Ascending aorta (tissue), 2 donors: ENCODE measurements at regions of chr11 and their contacts with region 1.

Region 1: DNA sequence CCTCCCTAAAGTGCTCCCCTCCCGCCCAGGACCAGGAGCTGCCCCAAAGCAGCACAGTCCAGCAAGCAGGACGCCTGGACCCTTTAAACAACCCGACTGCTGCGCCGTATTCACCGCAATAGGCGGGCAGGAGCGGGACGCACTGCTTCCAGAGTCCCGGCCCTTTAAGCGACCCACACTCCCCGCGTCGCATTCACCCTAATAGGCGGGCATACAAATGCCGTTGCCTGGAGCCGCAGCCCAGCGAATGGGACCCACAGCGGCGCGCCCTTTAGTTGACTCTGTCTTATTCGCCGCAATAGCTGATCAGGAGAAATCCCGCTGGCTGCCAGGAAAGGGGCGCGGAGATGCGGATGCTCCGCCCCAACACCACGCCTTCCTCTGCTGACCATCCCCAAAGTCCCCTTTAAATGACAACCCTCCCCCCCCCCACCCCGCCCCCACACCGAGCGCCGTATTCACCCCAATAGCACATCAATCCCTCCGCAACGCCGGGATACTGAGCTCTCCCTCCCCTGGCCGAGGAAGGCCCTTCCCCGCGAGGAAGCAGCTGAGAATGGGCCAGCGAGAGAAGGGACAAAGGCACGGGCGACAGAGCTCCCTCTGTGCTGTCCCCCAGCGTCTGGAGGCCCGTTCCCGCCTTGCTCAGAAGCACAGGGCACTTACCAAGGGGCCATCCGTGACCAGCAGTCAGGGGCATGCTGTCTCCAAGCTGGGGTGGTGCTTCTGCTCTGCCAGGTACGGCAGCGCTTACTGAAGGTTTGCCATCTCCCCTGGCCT is 4.7 kb downstream of the OSBPL5 start:
- DNase-seq: peak; percentile 57 to 95
- H3K4me3 ChIP-seq: peak overlapping the region; percentile 64 to 86
- H3K27ac ChIP-seq: peak overlapping the region; percentile 91 to 93
- H3K4me1 ChIP-seq: peaks cover 40 to 63% of the 10 kb centered on the region in 2 donors
- H3K27me3 ChIP-seq: no peaks in the 10 kb centered on the region
- CTCF ChIP-seq: no peak

Region 2: GRCh38 chr11:2992234-2992996 is 168.0 kb before region 1 on chr11 and contains the start of gene NAP1L4:
- intact Hi-C with region 1: loop called (anchors 5 kb)
- DNase-seq: peak; percentile 85 to 97
- H3K4me3 ChIP-seq: peak within 1 kb of the TSS; percentile 74 to 80
- H3K27ac ChIP-seq: peak within 1 kb of the TSS; percentile 71 to 90
- H3K4me1 ChIP-seq: peaks cover 6 to 27% of the 10 kb centered on the region in 2 donors
- H3K27me3 ChIP-seq: no peaks in the 10 kb centered on the region
- CTCF ChIP-seq: no peak
- total RNA-seq, gene NAP1L4: 54.5 TPM

Region 3: DNA sequence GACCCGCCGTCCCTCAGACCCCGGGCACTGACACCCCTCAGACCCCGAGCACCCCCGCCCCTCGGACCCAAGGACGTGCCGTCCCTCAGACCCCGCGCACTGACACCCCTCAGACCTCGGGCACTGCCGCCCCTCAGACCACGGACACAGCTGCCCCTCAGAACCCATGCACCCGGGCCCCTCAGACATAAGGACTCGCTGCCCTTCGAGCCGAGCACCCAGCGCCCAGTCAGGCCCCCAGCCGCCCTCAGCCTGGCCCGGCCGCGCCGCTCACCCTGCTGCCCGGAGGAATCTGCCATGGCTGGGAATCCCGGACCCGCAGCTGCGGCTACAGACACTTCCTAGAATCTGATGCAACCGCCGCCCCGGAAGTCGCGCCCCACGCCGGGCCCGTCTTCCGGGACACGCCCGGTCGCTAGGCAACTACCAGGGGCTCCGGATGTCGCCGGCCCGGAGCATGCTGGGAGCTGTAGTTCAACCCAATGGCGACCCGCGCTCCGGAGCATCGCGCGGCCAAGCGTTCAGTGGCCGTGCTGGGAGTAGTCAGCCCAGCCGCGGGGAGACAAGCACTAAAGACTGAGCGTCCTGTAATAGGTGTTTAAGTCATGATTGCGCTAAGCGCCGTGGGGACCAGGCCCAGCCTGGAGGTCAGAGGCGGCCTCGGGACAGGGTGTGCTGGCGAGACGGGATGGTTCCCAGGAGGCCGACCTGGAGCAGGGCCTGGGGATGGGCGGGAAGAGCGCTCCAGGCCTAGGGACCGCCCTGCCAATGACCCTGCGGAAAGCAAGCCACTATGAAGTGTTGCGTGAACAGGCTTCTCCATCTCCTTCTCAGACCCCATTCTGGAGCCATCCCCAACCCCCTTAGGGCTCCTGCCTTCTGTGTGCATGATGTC is 103.1 kb before region 1 on chr11 and contains the start of gene CARS1:
- intact Hi-C with region 1: loop called (anchors 5 kb)
- DNase-seq: peak; percentile 87 to 99
- H3K4me3 ChIP-seq: peak within 1 kb of the TSS; percentile 80 to 88
- H3K27ac ChIP-seq: peak within 1 kb of the TSS; percentile 71 to 81
- H3K4me1 ChIP-seq: peaks cover 0 to 11% of the 10 kb centered on the region in 2 donors
- H3K27me3 ChIP-seq: no peaks in the 10 kb centered on the region
- CTCF ChIP-seq: no peak
- total RNA-seq, gene CARS1: 51.4 TPM

Region 4: DNA sequence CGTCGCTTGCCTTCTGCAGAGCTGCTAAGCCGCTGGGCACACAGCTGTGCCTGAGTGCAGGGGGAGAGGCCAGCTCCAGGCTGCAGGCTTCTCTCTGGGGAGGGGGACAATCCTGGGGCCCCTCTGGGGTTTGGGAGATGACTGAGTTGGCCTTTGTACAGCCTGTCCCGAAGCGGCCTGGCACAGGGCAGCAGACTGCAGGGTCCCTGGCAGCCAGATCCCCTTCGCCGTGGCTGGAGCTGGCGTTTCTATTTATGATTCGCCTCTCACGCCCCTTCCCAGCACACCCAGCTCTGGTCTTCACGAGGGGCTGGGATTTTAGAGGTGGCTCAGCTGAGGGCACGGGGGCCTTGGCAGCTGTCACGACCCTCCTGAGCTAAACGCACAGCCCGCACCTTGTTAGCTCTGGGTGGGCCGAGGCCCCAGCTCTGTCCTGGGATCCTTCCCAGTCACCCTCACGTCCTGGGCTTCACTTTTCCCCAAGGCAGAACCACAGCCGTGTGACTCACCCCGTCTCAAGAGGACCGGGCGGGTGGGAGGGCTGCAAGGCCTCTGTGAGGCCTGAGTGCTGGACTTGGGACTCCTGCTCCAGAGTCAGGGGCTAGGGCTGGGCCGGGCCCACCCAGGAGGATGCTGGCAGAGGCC is 13.7 kb before region 1 on chr11:
- intact Hi-C with region 1: loop called (anchors 1 kb)
- DNase-seq: peak in 1 of 2 donors; percentile 80
- H3K4me3 ChIP-seq: peak overlapping the region; percentile 16 to 39
- H3K27ac ChIP-seq: peak overlapping the region; percentile 82 to 86
- H3K4me1 ChIP-seq: peaks cover 26 to 43% of the 10 kb centered on the region in 2 donors
- H3K27me3 ChIP-seq: no peaks in the 10 kb centered on the region
- CTCF ChIP-seq: no peak

Region 5: DNA sequence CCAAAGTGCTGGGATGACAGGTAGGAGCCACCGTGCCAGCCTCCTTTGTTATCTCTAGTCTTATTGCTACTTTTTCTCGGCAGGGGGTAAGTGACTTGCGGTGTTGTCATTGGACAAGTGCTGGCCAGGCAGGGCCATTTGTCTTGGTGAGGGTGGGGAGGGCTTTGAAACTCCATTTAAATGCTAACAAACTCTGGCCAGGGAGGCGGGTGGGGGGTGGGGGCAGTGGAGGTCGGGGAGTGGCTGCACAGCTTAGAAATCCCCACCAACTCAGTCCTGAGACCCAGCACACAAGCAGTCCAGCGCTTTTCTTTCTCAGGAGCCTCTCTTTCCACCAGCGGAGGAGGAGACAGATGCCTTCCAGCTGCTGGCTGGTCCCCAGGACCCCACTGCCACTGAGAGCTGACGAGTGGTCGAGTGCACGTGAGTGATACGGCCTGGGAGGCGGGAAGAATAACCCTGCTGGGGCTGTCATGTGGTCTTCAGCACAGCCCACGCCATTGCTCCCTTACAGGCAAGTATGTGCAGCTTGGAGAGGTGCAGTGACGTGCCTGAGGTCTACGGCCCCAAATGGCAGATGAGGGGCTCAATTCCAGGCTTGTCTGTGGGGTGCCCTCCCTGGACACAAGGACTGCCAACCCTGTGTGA is 28.9 kb after region 1 on chr11:
- intact Hi-C with region 1: no loop called
- DNase-seq: peak in 1 of 2 donors; percentile 53
- H3K4me3 ChIP-seq: no peak overlapping the region
- H3K27ac ChIP-seq: no peak overlapping the region
- H3K4me1 ChIP-seq: no peaks in the 10 kb centered on the region
- H3K27me3 ChIP-seq: no peaks in the 10 kb centered on the region
- CTCF ChIP-seq: no peak